ENCODE measurements at regions of chr6 and their contacts with region 1.

Region 1: GRCh38 chr6:90251295-90251992 is 45.2 kb downstream of the BACH2 start:
- DNase-seq: peak; percentile 30
- H3K4me3 Mint-ChIP-seq: peak overlapping the region; percentile 49
- H3K27ac Mint-ChIP-seq: peak overlapping the region; percentile 95
- H3K4me1 Mint-ChIP-seq: peaks cover 68% of the 10 kb centered on the region
- H3K27me3 Mint-ChIP-seq: no peaks in the 10 kb centered on the region

Region 2: GRCh38 chr6:89087881-89088280 is 1163.6 kb before region 1 on chr6:
- intact Hi-C with region 1: no loop called
- DNase-seq: no peak
- H3K4me3 Mint-ChIP-seq: no peak overlapping the region
- H3K27ac Mint-ChIP-seq: no peak overlapping the region
- H3K4me1 Mint-ChIP-seq: peaks cover 19% of the 10 kb centered on the region
- H3K27me3 Mint-ChIP-seq: no peaks in the 10 kb centered on the region

Region 3: GRCh38 chr6:90103056-90103800 is 148.2 kb before region 1 on chr6:
- intact Hi-C with region 1: loop called (anchors 2 kb)
- DNase-seq: peak; percentile 73
- H3K4me3 Mint-ChIP-seq: peak overlapping the region; percentile 64
- H3K27ac Mint-ChIP-seq: peak overlapping the region; percentile 88
- H3K4me1 Mint-ChIP-seq: peaks cover 60% of the 10 kb centered on the region
- H3K27me3 Mint-ChIP-seq: no peaks in the 10 kb centered on the region

Region 4: DNA sequence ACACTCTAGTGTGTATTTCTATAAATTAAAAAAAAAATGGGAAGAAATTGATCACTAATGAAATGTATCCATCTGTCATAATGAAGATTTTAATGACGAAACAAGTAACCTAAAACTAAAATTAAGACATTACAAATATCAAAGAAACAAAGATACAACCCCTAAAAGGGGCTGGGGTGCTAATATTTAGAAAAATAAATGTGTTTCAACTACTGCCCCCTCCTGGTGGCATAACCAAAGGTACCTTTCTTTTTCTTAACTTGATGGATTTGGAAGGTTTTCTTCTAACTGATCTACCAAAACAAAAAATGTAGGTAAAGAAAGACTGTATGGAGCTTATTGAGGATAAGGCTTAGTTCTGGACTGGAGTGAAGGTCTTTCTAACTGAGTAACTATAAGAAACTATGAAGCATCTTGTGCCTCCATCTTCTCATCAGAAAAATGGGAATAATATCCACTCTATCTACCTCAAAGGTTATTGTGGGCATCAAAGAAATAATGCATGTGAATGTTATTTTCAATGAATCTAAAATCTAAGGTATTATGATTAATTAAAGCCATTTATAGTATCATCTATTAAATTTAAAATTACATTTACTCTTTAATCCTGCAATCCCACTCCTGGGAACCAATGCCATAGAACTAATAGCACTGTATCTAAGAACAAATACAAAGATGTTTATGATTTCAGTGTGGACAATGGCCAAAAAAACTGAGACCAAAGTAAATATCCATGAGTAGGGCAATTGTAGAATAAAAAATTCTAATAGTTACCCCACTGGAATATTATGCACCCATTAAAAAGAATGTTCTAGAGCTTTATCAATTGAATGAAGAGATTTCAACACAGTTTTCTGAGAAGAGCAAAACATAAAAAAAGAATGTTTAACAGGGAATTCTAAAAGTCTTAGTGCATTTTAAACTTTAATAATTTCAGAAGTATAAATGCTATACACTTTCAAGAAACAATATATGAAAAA is 72.0 kb before region 1 on chr6:
- intact Hi-C with region 1: loop called (anchors 1 kb)
- DNase-seq: peak; percentile 75
- H3K4me3 Mint-ChIP-seq: peak overlapping the region; percentile 11
- H3K27ac Mint-ChIP-seq: no peak overlapping the region
- H3K4me1 Mint-ChIP-seq: peaks cover 68% of the 10 kb centered on the region
- H3K27me3 Mint-ChIP-seq: no peaks in the 10 kb centered on the region

Region 5: DNA sequence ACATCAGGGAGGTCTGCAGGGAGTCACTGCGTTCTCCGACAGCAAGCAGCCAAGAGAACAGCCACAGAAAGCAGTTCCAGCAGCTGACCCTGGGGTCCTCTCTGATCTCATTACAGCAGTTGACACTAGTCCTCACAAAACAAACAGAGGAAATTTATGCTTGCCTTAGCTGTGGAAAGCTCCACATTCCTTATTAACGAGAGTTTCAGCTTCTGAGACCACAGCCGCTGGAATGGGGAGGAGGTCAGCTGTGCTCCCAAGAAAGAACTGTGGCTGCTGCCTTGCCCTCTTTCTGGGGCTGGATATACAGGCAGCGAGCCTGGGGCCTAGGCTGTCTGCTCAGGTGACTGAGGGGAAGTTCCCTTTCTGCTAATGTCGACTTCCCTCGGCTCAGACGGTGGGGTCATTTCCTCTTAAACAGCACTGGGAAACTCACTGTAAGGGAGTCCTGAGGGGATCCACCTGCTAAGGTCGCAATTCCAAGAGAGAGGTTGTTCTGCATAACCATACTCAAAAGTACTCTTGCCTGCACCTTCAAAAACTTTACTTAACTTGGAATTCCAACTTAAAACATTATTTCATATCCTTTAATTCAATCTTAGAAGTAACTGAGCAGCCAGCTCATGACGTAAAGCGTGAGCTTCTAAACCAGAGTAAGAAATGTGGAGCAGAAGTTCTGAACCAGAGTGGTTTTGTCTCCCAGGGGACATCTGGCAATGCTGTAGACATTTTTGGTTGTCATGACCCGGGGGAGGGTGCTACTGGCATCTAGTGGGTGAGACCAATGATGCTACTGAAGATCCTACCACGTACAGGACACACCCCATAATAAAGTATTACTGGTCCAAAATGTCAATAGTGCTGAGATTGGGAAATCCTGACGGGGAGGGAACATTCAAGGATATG is 35.1 kb before region 1 on chr6:
- intact Hi-C with region 1: loop called (anchors 1 kb)
- DNase-seq: peak; percentile 79
- H3K4me3 Mint-ChIP-seq: peak overlapping the region; percentile 48
- H3K27ac Mint-ChIP-seq: no peak overlapping the region
- H3K4me1 Mint-ChIP-seq: peaks cover 40% of the 10 kb centered on the region
- H3K27me3 Mint-ChIP-seq: no peaks in the 10 kb centered on the region

Region 6: DNA sequence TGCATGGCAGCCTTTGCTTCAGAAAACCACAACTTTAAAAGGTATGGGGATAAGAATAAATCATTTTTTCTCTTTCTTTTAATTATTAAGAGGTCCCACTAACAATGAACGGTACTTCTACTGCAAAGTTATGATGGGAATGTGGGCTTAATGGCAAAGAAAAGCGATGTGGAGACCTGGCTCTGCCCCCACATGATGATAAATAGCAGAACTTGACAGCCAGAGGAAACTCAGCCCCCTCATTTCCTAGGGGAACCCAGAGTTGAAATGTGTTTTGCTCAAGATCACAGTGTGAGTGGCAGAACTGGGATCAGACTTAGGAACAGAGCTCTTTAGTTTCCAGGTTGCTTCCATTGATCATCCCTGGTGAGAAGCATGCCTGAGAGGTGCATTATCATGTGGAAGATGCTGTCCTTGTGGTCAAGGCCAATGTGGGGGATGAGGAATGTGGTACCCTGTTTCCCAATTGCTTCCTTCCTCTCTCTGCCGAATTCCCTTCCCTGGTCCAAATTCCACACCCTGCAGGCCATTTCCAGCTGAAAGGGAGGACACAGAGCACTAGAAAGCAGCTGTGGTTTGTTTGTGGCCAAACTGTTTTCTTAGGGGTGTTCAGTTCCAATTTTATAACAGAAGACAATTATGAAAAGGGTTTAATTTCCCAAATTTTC is 20.8 kb before region 1 on chr6:
- intact Hi-C with region 1: loop called (anchors 1 kb)
- DNase-seq: no peak
- H3K4me3 Mint-ChIP-seq: peak overlapping the region; percentile 56
- H3K27ac Mint-ChIP-seq: peak overlapping the region; percentile 30
- H3K4me1 Mint-ChIP-seq: peaks cover 78% of the 10 kb centered on the region
- H3K27me3 Mint-ChIP-seq: no peaks in the 10 kb centered on the region

Region 7: DNA sequence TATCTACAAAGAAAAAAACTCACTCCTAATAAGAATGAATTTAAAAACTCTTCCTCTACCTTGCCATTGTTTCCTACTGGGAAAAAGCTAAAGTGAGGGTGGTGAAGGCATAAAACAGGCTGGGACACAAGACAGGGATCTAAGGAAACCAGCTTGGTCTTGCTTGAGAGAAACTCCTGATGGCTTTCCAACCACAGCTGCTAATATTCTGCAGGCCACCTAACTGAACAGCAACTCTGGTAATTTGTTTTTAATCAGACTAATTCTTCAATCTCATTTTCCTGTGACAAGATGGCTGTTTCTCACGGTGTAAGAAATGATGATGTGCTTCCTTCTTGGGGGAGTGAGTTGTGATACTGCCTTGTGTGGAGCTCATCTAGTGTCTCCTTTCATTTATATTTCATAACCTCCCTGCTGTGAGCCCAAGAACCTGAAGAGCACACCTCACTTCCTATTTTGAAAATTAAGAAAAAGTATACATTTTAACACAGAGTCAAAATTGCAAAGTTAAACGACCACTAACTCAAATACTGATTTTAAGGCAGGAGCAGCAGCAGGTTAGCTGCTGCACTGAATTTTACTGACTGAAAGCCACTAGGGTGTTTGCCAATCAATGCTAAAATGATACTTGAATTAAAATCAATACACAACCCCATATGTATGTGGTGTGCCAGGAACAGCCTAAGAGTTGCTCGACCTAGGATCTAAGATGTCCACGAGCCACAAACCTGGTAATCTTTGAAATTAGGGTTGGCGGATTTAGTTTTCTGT is 12.8 kb before region 1 on chr6:
- intact Hi-C with region 1: loop called (anchors 1 kb)
- DNase-seq: peak; percentile 57
- H3K4me3 Mint-ChIP-seq: peak overlapping the region; percentile 65
- H3K27ac Mint-ChIP-seq: peak overlapping the region; percentile 82
- H3K4me1 Mint-ChIP-seq: peaks cover 63% of the 10 kb centered on the region
- H3K27me3 Mint-ChIP-seq: no peaks in the 10 kb centered on the region

Region 8: GRCh38 chr6:90296346-90297114 is 45.1 kb after region 1 on chr6 and contains the start of gene BACH2:
- intact Hi-C with region 1: loop called (anchors 1 kb)
- DNase-seq: peak; percentile 97
- H3K4me3 Mint-ChIP-seq: peak within 1 kb of the TSS; percentile 94
- H3K27ac Mint-ChIP-seq: peak within 1 kb of the TSS; percentile 95
- H3K4me1 Mint-ChIP-seq: peaks cover 40% of the 10 kb centered on the region
- H3K27me3 Mint-ChIP-seq: peaks cover 23% of the 10 kb centered on the region
- total RNA-seq, gene BACH2: 69.0 and 69.2 TPM in 2 replicates

Measured in activated CD4-positive, alpha-beta T cell treated with anti-CD3 and anti-CD28 coated beads, Interleukin-2, amount 10 ng/mL, durations not matched to agents 24 days and 14 days (primary cell).